ENCODE measurements at regions of chr11 and their contacts with region 1.

Region 1: DNA sequence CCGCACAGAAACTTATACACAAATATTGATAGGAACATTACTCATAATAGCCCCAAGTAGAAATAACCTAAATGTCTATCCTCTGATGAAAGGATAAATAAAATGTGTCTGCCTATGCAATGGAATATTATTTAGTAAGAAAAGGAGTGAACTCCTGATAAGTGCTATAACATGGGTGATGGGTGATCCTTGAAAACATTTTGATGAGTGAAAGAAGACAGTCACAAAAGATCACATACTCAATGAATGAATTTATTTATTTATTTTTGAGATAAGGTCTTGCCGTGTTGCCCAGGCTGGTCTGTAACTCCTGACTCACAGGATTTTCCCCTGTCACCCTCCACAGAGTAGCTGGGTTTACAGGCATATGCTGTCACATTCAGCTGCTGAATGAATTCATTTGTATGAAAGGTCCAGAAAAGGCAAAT is 17.3 kb downstream of the RNF121 start:
- DNase-seq: peak; percentile 53 to 77
- ATAC-seq: peak; percentile 70 to 75
- H3K4me3 ChIP-seq: no peak overlapping the region
- H3K27ac ChIP-seq: peak overlapping the region; percentile 87 to 92
- H3K4me1 ChIP-seq: peaks cover 84% of the 10 kb centered on the region
- CTCF ChIP-seq: no peak
- EP300 ChIP-seq: peak in 1 of 2 experiments; percentile 38; a peak in 1 of 5 replicates
- POLR2A ChIP-seq: no peak
- RAD21 ChIP-seq: peak; percentile 8; a peak in 1 of 5 replicates

Region 2: DNA sequence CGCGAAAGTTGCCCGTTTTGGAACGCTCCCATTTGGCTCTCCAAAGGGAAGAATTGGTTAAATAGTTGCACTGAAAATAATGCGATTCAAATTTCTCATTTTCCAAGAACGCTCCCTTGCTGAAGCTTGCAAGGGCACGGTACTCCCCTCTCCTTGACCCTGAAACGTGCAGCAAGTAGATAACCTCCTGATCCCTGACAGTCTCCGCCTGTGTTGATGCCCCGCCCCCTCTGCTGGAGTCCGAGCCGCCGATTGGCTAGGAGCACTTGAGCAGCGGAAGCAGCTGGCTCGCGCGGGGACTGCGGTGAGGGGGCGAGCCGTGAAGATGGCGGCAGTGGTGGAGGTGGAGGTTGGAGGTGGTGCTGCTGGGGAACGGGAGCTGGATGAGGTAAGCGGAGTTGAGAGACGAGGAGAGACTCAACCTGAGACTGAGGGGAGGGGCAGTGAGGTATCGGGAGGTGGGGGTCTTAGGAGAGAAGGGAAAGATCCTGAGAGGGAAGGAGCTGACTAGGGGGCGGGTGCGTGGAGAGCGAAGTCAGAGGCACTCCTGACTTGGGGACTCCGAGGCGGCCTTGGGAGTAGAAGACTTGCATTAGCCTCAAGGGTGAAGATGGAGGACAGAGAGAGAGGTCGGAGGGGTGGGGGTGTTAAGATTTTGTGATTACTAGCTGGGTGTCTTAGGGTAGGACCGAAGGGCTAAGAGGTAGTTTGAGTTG is 17.3 kb before region 1 on chr11 and contains the start of gene RNF121:
- CTCF ChIA-PET with region 1: interaction called, 8 read pairs
- POLR2A ChIA-PET with region 1: interaction called, 21 read pairs
- DNase-seq: peak; percentile 95 to 96
- ATAC-seq: peak; percentile 97
- H3K4me3 ChIP-seq: peak within 1 kb of the TSS; percentile 90
- H3K27ac ChIP-seq: peak within 1 kb of the TSS; percentile 91 to 95
- H3K4me1 ChIP-seq: peaks cover 47% of the 10 kb centered on the region
- CTCF ChIP-seq: no peak
- EP300 ChIP-seq: no peak
- POLR2A ChIP-seq: peak; percentile 90
- RAD21 ChIP-seq: no peak
- polyA plus RNA-seq, gene RNF121: 102 and 105 TPM in 2 replicates